Right ventricle myocardium inferior (tissue), 1 donor: ENCODE measurements at regions of chr10 and their contacts with region 1.

Region 1: GRCh38 chr10:588241-589165 is 101.0 kb downstream of the DIP2C start:
- DNase-seq: no peak
- ATAC-seq: peak; percentile 77

Region 2: DNA sequence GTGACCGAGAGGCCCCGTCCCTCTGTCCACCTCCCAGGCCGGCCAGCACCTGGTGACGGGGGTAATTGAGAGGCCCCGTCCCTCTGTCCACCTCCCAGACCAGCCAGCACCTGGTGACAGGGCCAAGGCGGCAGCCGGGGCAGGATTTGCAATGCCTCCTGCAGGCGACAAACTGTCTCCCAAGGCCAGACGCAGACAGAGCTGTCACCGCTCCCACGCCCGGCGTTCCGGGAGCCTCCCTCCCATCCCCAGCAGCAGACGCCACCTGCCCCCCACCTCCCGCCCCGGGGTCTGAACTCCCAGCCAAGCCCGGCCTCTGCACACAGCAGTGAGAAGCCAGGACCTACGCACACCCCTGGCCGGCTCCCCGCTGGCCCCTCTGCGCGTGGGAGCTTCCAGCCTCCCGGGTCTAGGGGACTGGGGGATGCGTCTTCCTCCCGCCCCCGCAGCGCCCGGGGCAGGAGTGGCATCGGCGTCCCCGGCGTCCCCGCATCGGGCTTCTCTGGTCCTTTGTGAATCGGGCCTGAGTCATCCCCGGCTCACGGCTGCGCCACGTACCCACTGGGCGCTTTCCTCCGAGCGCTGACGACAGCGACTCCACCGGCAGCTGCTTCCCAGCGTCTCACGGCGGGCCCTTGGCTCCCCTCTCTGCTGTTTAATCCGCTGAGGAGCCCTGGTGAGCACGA is 196.0 kb after region 1 on chr10:
- intact Hi-C with region 1: loop called (anchors 5 kb)
- DNase-seq: peak; percentile 73
- ATAC-seq: peak; percentile 50